Vagina (tissue), 2 donors: ENCODE measurements at regions of chr6 and their contacts with region 1.

Region 1: GRCh38 chr6:161370880-161371279 is 97.0 kb upstream of the AGPAT4 start:
- DNase-seq: no peak
- H3K4me3 ChIP-seq: no peak overlapping the region
- H3K27ac ChIP-seq: no peak overlapping the region
- H3K4me1 ChIP-seq: peaks cover 9% of the 10 kb centered on the region
- H3K27me3 ChIP-seq: no peaks in the 10 kb centered on the region
- CTCF ChIP-seq: peak; percentile 61 to 93 (median 84)
- POLR2A ChIP-seq: no peak

Region 2: DNA sequence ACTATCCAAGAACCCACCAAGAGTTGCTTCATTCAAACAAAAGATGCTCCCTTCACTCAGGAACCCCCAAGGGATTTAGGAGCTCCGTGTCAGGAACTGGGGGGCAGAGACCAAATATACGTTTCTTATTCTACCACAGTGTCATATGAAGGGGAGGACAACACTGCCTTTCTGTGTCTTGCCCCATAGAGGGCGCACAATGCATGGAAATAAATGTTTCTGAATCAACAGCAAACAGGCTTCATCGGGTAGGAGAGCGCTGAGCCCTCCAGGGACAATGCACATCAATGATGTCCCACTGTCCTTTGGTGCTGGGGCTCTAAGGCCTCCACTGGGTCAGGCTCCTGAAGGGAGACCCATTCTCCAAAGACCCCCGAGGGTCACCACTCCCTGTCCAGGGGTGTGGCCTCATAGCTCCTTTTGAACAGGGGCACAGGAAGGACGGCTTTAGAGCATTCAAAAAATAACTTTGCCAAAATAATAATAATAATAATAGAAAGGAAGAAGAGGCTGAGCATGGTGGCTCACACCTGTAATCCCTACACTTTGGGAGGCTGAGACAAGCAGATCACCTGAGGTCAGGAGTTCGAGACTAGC is 637.7 kb before region 1 on chr6:
- intact Hi-C with region 1: loop called (anchors 10 kb)
- DNase-seq: no peak
- H3K4me3 ChIP-seq: no peak overlapping the region
- H3K27ac ChIP-seq: no peak overlapping the region
- H3K4me1 ChIP-seq: no peaks in the 10 kb centered on the region
- H3K27me3 ChIP-seq: no peaks in the 10 kb centered on the region
- CTCF ChIP-seq: peak; percentile 40 to 47 (median 44)
- POLR2A ChIP-seq: no peak

Region 3: GRCh38 chr6:160930547-160931377 is 440.1 kb before region 1 on chr6:
- intact Hi-C with region 1: loop called (anchors 5 kb)
- DNase-seq: peak in 1 of 2 donors; percentile 92
- H3K4me3 ChIP-seq: peak overlapping the region; percentile 53 to 64
- H3K27ac ChIP-seq: peak overlapping the region; percentile 72
- H3K4me1 ChIP-seq: peaks cover 10% of the 10 kb centered on the region
- H3K27me3 ChIP-seq: no peaks in the 10 kb centered on the region
- CTCF ChIP-seq: peak; percentile 77 to 95 (median 82)
- POLR2A ChIP-seq: no peak

Region 4: DNA sequence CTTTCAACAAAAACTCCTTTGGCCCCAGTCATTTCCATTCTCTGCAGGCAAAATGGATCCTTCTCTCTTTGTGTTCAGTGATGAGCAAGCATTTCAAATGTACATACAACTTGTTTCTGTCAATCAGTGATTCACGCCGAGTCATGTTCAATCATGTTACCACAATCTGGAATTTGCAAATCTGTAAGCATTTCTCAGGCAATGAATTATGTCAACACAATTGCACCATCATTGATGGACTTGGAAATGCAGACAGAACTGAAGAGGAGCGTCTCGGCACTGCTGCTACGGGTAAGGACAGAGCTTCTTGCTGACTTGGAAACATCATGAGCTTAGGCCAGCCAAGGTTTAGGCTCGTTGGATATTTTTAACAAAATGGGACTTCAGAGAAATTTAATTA is 35.8 kb after region 1 on chr6:
- intact Hi-C with region 1: no loop called
- DNase-seq: no peak
- H3K4me3 ChIP-seq: no peak overlapping the region
- H3K27ac ChIP-seq: no peak overlapping the region
- H3K4me1 ChIP-seq: no peaks in the 10 kb centered on the region
- H3K27me3 ChIP-seq: no peaks in the 10 kb centered on the region
- CTCF ChIP-seq: no peak
- POLR2A ChIP-seq: no peak

Region 5: GRCh38 chr6:161684731-161685475 is 314.0 kb after region 1 on chr6:
- intact Hi-C with region 1: no loop called
- DNase-seq: no peak
- H3K4me3 ChIP-seq: no peak overlapping the region
- H3K27ac ChIP-seq: no peak overlapping the region
- H3K4me1 ChIP-seq: no peaks in the 10 kb centered on the region
- H3K27me3 ChIP-seq: no peaks in the 10 kb centered on the region
- CTCF ChIP-seq: no peak
- POLR2A ChIP-seq: no peak